ENCODE measurements at regions of chr16 and their contacts with region 1.

Region 1: GRCh38 chr16:56547120-56547948 is 17.5 kb upstream of the MT4 start:
- DNase-seq: peak; percentile 30
- H3K4me3 ChIP-seq: no peak overlapping the region
- H3K27me3 ChIP-seq: no peaks in the 10 kb centered on the region
- CTCF ChIP-seq: no peak

Region 2: GRCh38 chr16:56532714-56533113 is 14.6 kb before region 1 on chr16:
- CTCF ChIA-PET with region 1: interaction called, 10 read pairs
- POLR2A ChIA-PET with region 1: no interaction called
- DNase-seq: no peak
- H3K4me3 ChIP-seq: no peak overlapping the region
- H3K27me3 ChIP-seq: peaks cover 5% of the 10 kb centered on the region
- CTCF ChIP-seq: no peak

Region 3: DNA sequence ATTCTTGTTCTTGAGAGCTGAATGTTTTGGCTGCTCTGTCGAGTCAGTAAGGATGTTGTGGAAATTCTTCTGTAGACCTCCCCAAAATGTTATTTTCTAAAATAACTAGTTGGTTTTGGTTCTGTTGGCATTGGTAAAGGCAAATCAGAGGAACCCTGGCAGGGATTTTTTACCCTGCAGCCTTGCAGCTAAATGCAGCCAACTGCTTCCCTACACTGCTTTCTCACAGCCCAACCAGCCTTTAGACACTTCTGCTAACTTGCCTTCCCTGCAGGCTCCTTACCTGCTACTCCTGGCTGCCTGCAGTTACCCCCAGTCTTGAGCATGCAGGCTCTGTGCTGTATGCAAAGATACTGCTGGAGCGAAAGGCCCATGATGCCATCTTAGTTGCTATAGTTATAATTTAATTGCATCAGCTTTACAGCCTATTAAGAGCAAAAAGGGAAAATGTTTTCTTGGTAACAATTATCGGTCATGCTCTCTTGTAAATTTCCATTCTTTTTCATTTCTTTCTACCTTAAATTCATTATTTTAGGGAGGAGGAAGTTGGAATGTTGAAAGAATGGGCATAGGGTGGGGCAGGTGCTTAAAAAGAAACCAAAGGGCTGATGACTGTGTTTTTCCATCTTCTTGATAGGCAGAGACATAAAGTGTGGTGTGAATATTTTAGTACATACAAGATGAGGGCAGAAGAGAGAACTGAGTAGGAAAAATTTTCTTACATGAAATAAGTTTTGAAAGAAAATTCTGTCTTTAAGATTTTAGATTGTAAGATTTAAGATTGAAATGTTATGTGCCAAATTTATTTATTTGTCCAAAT is 202.5 kb after region 1 on chr16:
- CTCF ChIA-PET with region 1: no interaction called
- POLR2A ChIA-PET with region 1: no interaction called
- DNase-seq: no peak
- H3K4me3 ChIP-seq: no peak overlapping the region
- H3K27me3 ChIP-seq: no peaks in the 10 kb centered on the region
- CTCF ChIP-seq: no peak

Measured in BJ (cell line).